Right ventricle myocardium inferior (tissue), 1 donor: ENCODE measurements at regions of chr21 and their contacts with region 1.

Region 1: GRCh38 chr21:33924079-33924765 is 8.6 kb upstream of the ATP5PO start:
- DNase-seq: peak; percentile 93
- ATAC-seq: peak; percentile 95

Region 2: GRCh38 chr21:34336756-34337391 is 412.7 kb after region 1 on chr21:
- intact Hi-C with region 1: loop called (anchors 10 kb)
- DNase-seq: no peak
- ATAC-seq: no peak

Region 3: DNA sequence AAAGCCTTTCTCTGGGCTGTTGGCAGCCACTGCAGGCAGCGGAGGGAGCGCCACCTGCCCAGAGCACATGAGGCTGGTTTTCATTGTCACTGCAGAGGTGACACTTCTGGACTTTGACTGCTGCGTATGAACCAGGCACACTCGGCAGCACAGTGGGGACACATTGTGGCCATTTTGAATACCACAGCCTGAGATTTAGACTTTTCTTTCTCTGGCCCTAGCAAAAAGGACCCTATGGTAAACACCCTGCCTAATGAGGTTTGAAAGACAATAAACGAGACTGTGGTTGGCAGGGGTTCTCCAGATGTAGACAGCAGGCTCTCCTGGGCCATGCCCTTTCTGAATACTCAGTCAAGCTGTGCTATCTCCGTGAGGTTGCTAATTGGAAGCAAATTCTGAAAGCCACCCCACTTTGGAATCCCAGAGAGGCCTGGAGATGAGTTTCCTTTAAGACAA is 427.6 kb after region 1 on chr21:
- intact Hi-C with region 1: loop called (anchors 2 kb)
- DNase-seq: no peak
- ATAC-seq: peak; percentile 80